Common myeloid progenitor, CD34-positive (primary cell): ENCODE measurements at regions of chr2 and their contacts with region 1.

Region 1: DNA sequence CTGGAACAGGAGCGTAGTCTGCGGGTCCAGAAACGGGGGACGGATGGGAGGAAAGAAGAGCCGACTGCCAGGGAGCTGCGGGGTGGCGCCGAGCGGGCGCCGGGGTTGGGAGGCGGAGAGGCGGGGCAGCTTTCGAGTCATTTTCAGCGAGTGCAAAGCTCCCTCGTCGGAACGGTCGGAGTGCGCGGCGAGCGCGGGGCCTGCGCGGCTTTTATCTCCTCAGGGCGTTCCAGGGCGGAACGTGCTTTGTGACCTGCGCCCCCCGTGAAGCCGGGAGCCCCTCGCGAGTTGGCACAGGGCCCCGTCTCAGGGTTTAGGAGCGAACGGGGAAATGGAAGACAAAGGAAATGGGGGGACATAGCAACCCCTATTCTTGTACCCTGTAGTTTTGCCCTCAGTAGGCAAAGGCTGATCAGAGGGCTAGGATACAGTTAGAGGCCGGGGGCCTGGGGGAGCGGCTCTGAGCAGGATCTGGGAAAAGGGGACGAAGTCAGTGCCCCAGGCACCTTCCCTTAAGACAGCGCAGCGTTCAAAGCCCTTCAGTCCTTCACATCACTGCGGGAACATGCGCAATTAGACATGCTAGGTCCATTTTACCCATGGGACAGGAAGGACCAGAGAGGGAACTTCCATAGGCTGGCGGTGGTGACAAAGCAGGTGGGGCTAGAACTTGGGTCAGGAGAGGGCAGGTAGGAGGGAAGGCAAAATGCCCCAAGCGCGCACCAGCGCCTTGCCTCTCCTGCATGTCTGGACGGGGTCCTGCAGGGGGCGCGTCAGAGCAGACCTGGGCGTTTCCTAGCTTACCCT is 60.1 kb upstream of the IL1RL1 start:
- DNase-seq: peak; percentile 67 to 76 (median 72)
- H3K4me3 ChIP-seq: peak overlapping the region; percentile 4 to 79 (median 64)
- H3K27ac ChIP-seq: no peak overlapping the region
- H3K4me1 ChIP-seq: peaks cover 0 to 9% (median 6%) of the 10 kb centered on the region in 4 experiments
- H3K27me3 ChIP-seq: peaks cover 0 to 8% (median 0%) of the 10 kb centered on the region in 5 experiments

Region 2: DNA sequence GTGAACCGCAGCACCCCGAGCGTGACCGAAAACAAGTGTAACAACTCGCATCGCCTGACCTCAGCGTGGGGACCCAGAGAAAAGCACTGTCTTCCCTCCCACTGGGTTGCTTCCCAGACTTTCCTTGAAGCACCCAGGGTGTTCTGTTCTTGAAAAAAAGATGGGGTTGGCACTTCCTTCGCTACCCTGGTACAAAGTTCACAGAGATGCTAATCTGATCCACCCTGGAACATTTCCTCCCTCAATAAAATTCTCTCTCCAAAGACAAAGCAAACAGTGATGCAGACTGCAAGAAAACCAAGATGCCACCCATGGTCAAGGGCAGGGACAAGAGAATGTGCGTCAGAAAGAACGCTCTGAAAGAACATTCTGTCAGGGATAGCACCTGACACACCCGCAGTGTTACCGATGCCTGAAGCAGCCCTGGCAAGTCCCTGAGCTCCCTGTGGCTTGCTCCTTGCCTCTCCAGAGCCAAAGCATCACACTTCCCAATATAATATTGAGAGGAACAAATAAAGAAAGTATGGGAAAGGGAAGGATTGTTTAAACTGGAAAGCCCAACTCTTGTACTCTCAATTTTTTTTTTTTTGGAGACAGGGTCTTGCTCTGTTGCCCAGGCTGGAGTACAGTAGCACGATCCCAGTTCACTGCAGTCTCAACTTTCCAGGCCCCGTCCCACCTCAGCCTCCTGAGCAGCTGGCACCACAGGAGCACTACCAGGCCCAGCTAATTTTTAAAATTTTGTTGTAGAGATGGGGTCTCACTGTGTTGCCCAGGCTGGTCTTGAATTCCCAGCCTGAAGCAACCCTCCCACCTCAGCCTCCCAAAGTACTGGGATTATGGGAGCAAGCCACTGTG is 1170.8 kb before region 1 on chr2:
- CTCF ChIA-PET with region 1: no interaction called
- POLR2A ChIA-PET with region 1: no interaction called
- DNase-seq: no peak
- H3K4me3 ChIP-seq: no peak overlapping the region
- H3K27ac ChIP-seq: no peak overlapping the region
- H3K4me1 ChIP-seq: peaks cover 0 to 7% (median 0%) of the 10 kb centered on the region in 4 experiments
- H3K27me3 ChIP-seq: no peaks in the 10 kb centered on the region

Region 3: DNA sequence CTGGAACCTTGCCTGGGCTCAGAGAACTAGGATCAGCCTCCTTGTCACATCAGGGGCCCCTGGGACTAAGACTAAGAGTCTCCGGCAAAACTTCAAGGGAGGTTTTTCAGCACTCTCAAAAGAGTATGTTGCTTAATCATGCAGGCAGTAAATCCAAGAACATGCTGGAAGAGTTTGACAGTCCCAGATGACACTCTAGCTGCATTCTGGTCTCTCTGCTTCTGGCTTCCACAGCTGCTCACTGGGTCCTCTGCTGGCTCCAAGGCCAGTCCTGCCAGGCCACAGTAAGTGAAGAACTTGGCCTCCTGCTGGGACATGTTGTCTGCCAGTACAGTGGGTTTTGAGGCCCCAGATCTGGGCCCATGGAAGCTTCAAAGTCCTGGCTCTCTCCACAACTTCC is 15.0 kb after region 1 on chr2:
- CTCF ChIA-PET with region 1: interaction called, 14 read pairs
- POLR2A ChIA-PET with region 1: no interaction called
- DNase-seq: no peak
- H3K4me3 ChIP-seq: no peak overlapping the region
- H3K27ac ChIP-seq: no peak overlapping the region
- H3K4me1 ChIP-seq: peaks cover 0 to 9% (median under 1%) of the 10 kb centered on the region in 4 experiments
- H3K27me3 ChIP-seq: no peaks in the 10 kb centered on the region

Region 4: GRCh38 chr2:102442967-102443828 is 192.0 kb after region 1 on chr2:
- CTCF ChIA-PET with region 1: interaction called, 82 read pairs
- POLR2A ChIA-PET with region 1: no interaction called
- DNase-seq: peak; percentile 53 to 69 (median 59)
- H3K4me3 ChIP-seq: peak overlapping the region in 1 of 7 experiments; percentile 49
- H3K27ac ChIP-seq: no peak overlapping the region
- H3K4me1 ChIP-seq: peaks cover 4 to 15% (median 5%) of the 10 kb centered on the region in 4 experiments
- H3K27me3 ChIP-seq: no peaks in the 10 kb centered on the region